ENCODE measurements at regions of chr6 and their contacts with region 1.

Region 1: GRCh38 chr6:158220786-158221442 is 52.8 kb downstream of the GTF2H5 start:
- DNase-seq: peak; percentile 71 to 97 (median 89)
- ATAC-seq: peak; percentile 98
- H3K4me3 ChIP-seq: no peak overlapping the region
- H3K27ac ChIP-seq: no peak overlapping the region
- H3K4me1 ChIP-seq: peaks cover 0 to 8% of the 10 kb centered on the region in 2 donors
- H3K27me3 ChIP-seq: no peaks in the 10 kb centered on the region
- CTCF ChIP-seq: peak; percentile 94 to 96

Region 2: GRCh38 chr6:158518191-158519127 is 297.5 kb after region 1 on chr6:
- intact Hi-C with region 1: loop called in 1 of 2 experiments (anchors 10 kb)
- DNase-seq: peak in 2 of 4 donors; percentile 49 to 66
- ATAC-seq: peak; percentile 75
- H3K4me3 ChIP-seq: no peak overlapping the region
- H3K27ac ChIP-seq: no peak overlapping the region
- H3K4me1 ChIP-seq: peaks cover 6 to 8% of the 10 kb centered on the region in 2 donors
- H3K27me3 ChIP-seq: peaks cover 7 to 53% of the 10 kb centered on the region in 2 donors
- CTCF ChIP-seq: peak; percentile 16 to 36

Region 3: GRCh38 chr6:158605266-158605878 is 384.5 kb after region 1 on chr6:
- intact Hi-C with region 1: loop called in 1 of 2 experiments (anchors 10 kb)
- DNase-seq: peak in 2 of 4 donors; percentile 44 to 72
- ATAC-seq: peak; percentile 90
- H3K4me3 ChIP-seq: no peak overlapping the region
- H3K27ac ChIP-seq: no peak overlapping the region
- H3K4me1 ChIP-seq: no peaks in the 10 kb centered on the region
- H3K27me3 ChIP-seq: no peaks in the 10 kb centered on the region
- CTCF ChIP-seq: peak; percentile 45 to 56

Region 4: DNA sequence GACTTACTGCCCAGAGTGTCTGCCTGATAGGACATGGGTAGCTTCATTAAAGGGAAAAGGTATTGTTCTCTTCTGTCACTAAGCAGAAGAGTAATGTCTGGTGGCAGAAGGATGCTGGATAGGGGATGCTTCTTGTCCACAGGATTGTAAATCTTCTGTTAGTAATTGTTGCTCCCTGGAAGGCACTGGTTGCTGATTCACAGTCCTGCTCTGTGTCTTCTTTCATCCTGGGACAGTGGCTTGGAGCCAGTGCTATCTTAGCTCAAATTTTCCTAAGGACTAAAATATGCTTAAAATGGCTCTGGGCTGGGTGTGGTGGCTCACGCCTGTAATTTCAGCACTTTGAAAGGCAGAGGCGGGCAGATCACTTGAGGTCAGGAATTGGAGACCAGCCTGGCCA is 476.9 kb after region 1 on chr6:
- intact Hi-C with region 1: loop called in 1 of 2 experiments (anchors 10 kb)
- DNase-seq: no peak
- ATAC-seq: peak; percentile 15
- H3K4me3 ChIP-seq: no peak overlapping the region
- H3K27ac ChIP-seq: no peak overlapping the region
- H3K4me1 ChIP-seq: no peaks in the 10 kb centered on the region
- H3K27me3 ChIP-seq: no peaks in the 10 kb centered on the region
- CTCF ChIP-seq: no peak

Measured in left lung (tissue), 14 donors.